CD4-positive, alpha-beta memory T cell (primary cell): ENCODE measurements at regions of chr17 and their contacts with region 1.

Region 1: GRCh38 chr17:78250891-78251794 is 19.7 kb downstream of the TMEM235 start:
- DNase-seq: peak; percentile 75 to 85 (median 80)
- H3K4me3 ChIP-seq: peak overlapping the region; percentile 54 to 65
- H3K4me3 Mint-ChIP-seq: peak overlapping the region; percentile 82 to 94 (median 88)
- H3K27ac ChIP-seq: peak overlapping the region; percentile 61
- H3K27ac Mint-ChIP-seq: peak overlapping the region; percentile 96 to 99 (median 98)
- H3K4me1 ChIP-seq: peaks cover 56% of the 10 kb centered on the region
- H3K4me1 Mint-ChIP-seq: peaks cover 31 to 58% (median 44%) of the 10 kb centered on the region in 4 donors
- H3K27me3 ChIP-seq: no peaks in the 10 kb centered on the region
- H3K27me3 Mint-ChIP-seq: peaks cover 0 to 1% of the 10 kb centered on the region in 2 donors

Region 2: DNA sequence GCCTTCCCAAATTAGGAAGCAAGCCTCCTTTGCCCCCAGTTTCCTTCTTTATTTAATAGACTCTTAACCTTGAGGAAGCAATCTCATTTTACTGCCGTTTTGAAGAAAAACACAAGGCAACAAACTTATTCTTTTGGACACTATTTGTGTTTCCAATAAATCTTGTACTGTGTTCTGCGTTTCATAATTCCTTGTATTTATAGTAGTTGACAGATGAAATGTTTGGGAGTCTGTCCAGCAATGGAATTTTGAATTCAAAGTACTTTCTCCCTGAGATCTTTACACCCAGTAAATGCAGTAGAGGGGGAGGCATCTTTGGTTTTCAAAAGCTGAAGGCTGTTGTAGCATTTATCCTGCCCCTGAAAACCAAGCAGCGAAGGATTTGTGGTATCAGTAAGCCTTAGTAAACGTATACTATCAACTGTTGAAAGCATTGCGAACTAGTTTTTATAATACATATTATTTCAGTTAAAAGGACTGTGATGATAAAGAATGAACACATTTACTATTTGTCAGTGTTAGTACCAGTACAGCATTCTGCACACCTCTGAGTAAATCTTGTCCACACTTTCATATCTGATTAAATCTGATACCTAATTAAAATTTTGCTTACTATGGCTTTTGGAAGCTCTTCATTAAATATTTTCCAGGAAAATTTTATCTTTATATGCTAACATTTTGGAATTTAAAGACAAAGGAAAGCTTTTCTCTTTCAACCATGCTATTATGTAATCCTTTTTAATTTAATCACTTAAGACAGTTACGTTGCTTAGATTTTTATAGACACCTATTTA is 209.6 kb before region 1 on chr17:
- CTCF ChIA-PET with region 1: no interaction called
- POLR2A ChIA-PET with region 1: no interaction called
- intact Hi-C with region 1: no loop called
- DNase-seq: no peak
- H3K4me3 ChIP-seq: no peak overlapping the region
- H3K4me3 Mint-ChIP-seq: peak overlapping the region; percentile 71 to 89 (median 82)
- H3K27ac ChIP-seq: no peak overlapping the region
- H3K27ac Mint-ChIP-seq: peak overlapping the region; percentile 66 to 91 (median 85)
- H3K4me1 ChIP-seq: peaks cover 14% of the 10 kb centered on the region
- H3K4me1 Mint-ChIP-seq: peaks cover 43 to 61% (median 48%) of the 10 kb centered on the region in 4 donors
- H3K27me3 ChIP-seq: no peaks in the 10 kb centered on the region
- H3K27me3 Mint-ChIP-seq: no peaks in the 10 kb centered on the region

Region 3: DNA sequence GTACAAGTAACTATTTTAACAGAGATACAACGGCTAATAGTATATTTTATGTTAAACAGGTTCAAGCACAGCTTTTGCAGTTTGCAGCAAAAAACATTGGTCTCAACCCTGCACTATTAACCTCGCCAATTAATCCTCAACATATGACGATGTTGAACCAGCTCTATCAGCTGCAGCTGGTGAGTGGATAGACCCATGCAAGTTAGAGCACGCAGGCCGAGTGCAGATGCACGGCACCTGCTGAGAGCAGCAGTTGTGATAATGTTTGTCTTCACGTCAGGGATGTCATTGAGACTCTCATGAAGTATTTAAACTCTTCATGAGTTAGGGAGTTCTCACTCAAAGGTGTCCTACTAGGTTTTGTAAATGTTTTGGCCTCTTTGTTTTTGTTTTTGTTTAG is 168.2 kb before region 1 on chr17:
- CTCF ChIA-PET with region 1: interaction called, 21 read pairs
- POLR2A ChIA-PET with region 1: interaction called, 3 read pairs
- intact Hi-C with region 1: no loop called
- DNase-seq: no peak
- H3K4me3 ChIP-seq: no peak overlapping the region
- H3K4me3 Mint-ChIP-seq: no peak overlapping the region
- H3K27ac ChIP-seq: no peak overlapping the region
- H3K27ac Mint-ChIP-seq: peak overlapping the region in 1 of 7 donors; percentile 69
- H3K4me1 ChIP-seq: no peaks in the 10 kb centered on the region
- H3K4me1 Mint-ChIP-seq: peaks cover 0 to 2% (median 0%) of the 10 kb centered on the region in 4 donors
- H3K27me3 ChIP-seq: no peaks in the 10 kb centered on the region
- H3K27me3 Mint-ChIP-seq: no peaks in the 10 kb centered on the region

Region 4: GRCh38 chr17:78128551-78129350 is 122.4 kb before region 1 on chr17 and contains the start of gene TMC6:
- CTCF ChIA-PET with region 1: interaction called, 3 read pairs
- POLR2A ChIA-PET with region 1: interaction called, 28 read pairs
- intact Hi-C with region 1: loop called (anchors 5 kb)
- DNase-seq: peak; percentile 80 to 91 (median 81)
- H3K4me3 ChIP-seq: peak within 1 kb of the TSS; percentile 97 to 99
- H3K4me3 Mint-ChIP-seq: peak within 1 kb of the TSS; percentile 95 to 100 (median 99)
- H3K27ac ChIP-seq: peak within 1 kb of the TSS; percentile 81
- H3K27ac Mint-ChIP-seq: peak within 1 kb of the TSS; percentile 95 to 99 (median 98)
- H3K4me1 ChIP-seq: peaks cover 64% of the 10 kb centered on the region
- H3K4me1 Mint-ChIP-seq: peaks cover 18 to 78% (median 34%) of the 10 kb centered on the region in 4 donors
- H3K27me3 ChIP-seq: no peaks in the 10 kb centered on the region
- H3K27me3 Mint-ChIP-seq: no peaks in the 10 kb centered on the region
- total RNA-seq, gene TMC6: 697 to 702 TPM

Region 5: GRCh38 chr17:78214706-78215061 is 36.5 kb before region 1 on chr17:
- CTCF ChIA-PET with region 1: no interaction called
- POLR2A ChIA-PET with region 1: no interaction called
- intact Hi-C with region 1: loop called (anchors 2 kb)
- DNase-seq: no peak
- H3K4me3 ChIP-seq: peak overlapping the region in 1 of 2 donors; percentile 69
- H3K4me3 Mint-ChIP-seq: peak overlapping the region; percentile 28 to 84 (median 72)
- H3K27ac ChIP-seq: peak overlapping the region; percentile 21
- H3K27ac Mint-ChIP-seq: peak overlapping the region in 1 of 7 donors; percentile 84
- H3K4me1 ChIP-seq: peaks cover 8% of the 10 kb centered on the region
- H3K4me1 Mint-ChIP-seq: peaks cover 3 to 9% (median 5%) of the 10 kb centered on the region in 4 donors
- H3K27me3 ChIP-seq: no peaks in the 10 kb centered on the region
- H3K27me3 Mint-ChIP-seq: no peaks in the 10 kb centered on the region

Region 6: GRCh38 chr17:78272181-78272913 is 21.2 kb after region 1 on chr17:
- CTCF ChIA-PET with region 1: interaction called, 5 read pairs
- POLR2A ChIA-PET with region 1: interaction called, 11 read pairs
- intact Hi-C with region 1: loop called (anchors 2 kb)
- DNase-seq: peak; percentile 58 to 87 (median 71)
- H3K4me3 ChIP-seq: no peak overlapping the region
- H3K4me3 Mint-ChIP-seq: peak overlapping the region in 6 of 8 donors; percentile 26 to 71 (median 34)
- H3K27ac ChIP-seq: no peak overlapping the region
- H3K27ac Mint-ChIP-seq: peak overlapping the region; percentile 52 to 94 (median 89)
- H3K4me1 ChIP-seq: peaks cover 32% of the 10 kb centered on the region
- H3K4me1 Mint-ChIP-seq: peaks cover 10 to 39% (median 22%) of the 10 kb centered on the region in 4 donors
- H3K27me3 ChIP-seq: no peaks in the 10 kb centered on the region
- H3K27me3 Mint-ChIP-seq: peaks cover 0 to 9% of the 10 kb centered on the region in 2 donors

Region 7: DNA sequence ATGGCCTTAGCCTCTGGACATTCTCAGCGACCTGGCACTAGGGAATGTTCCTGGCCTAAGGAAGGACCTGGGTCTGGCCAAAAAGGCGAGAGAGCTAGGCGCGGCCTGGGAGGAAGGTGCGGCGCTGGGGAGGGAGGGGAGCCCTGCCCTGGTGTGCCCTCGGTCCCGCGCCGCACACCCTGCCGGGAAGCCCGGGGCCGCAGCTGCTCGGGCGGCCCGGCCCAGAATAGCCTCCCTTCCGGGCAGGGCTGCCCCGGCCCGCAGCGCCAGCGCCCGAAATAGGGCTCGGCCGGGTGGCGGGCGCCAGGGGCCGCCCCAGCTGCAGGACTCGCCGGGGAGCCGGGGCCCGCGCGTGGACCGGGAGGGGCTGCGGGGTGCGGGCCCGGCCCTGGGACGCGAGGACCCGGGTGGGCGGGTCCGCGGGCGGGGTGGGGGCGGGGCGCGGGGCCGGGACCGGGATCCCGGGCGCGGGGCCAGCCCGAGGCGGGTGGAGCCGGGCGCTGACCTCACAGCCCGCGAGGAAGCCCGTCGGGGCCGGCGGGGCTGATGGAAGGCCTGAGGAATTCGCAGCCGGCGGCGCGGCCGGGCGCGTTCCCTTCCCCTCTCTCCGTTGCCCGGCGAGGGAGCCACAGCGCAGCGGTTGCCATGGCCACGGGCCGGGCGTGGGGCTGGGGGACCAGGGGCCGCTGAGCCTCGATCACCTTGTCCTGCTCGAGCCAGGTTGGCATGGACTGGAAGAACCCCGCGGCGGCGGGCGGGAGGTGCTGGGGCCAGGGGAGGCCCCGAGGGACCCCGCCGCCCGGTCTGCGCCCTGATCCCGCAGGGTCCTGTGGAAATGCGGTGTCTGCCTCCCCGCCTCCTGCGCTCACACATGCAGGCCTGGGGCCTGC is 90.7 kb after region 1 on chr17:
- CTCF ChIA-PET with region 1: interaction called, 12 read pairs
- POLR2A ChIA-PET with region 1: interaction called, 10 read pairs
- intact Hi-C with region 1: loop called (anchors 5 kb)
- DNase-seq: no peak
- H3K4me3 ChIP-seq: no peak overlapping the region
- H3K4me3 Mint-ChIP-seq: peak overlapping the region in 3 of 8 donors; percentile 12 to 70 (median 67)
- H3K27ac ChIP-seq: peak overlapping the region; percentile 61
- H3K27ac Mint-ChIP-seq: peak overlapping the region in 4 of 7 donors; percentile 27 to 98 (median 66)
- H3K4me1 ChIP-seq: peaks cover 83% of the 10 kb centered on the region
- H3K4me1 Mint-ChIP-seq: peaks cover 55 to 88% (median 68%) of the 10 kb centered on the region in 4 donors
- H3K27me3 ChIP-seq: no peaks in the 10 kb centered on the region
- H3K27me3 Mint-ChIP-seq: no peaks in the 10 kb centered on the region

Region 8: GRCh38 chr17:78421484-78422266 is 170.5 kb after region 1 on chr17:
- CTCF ChIA-PET with region 1: interaction called, 87 read pairs
- POLR2A ChIA-PET with region 1: interaction called, 30 read pairs
- intact Hi-C with region 1: loop called (anchors 1 kb)
- DNase-seq: peak; percentile 63 to 74 (median 64)
- H3K4me3 ChIP-seq: no peak overlapping the region
- H3K4me3 Mint-ChIP-seq: no peak overlapping the region
- H3K27ac ChIP-seq: no peak overlapping the region
- H3K27ac Mint-ChIP-seq: peak overlapping the region in 6 of 7 donors; percentile 12 to 79 (median 54)
- H3K4me1 ChIP-seq: peaks cover 9% of the 10 kb centered on the region
- H3K4me1 Mint-ChIP-seq: peaks cover 10 to 22% (median 14%) of the 10 kb centered on the region in 4 donors
- H3K27me3 ChIP-seq: no peaks in the 10 kb centered on the region
- H3K27me3 Mint-ChIP-seq: no peaks in the 10 kb centered on the region